ENCODE measurements at regions of chr6 and their contacts with region 1.

Region 1: GRCh38 chr6:9131616-9132015 is 696.3 kb upstream of the SLC35B3 start:
- DNase-seq: no peak
- ATAC-seq: no peak
- H3K4me3 ChIP-seq: no peak overlapping the region
- H3K27ac ChIP-seq: no peak overlapping the region
- H3K4me1 ChIP-seq: no peaks in the 10 kb centered on the region
- H3K27me3 ChIP-seq: no peaks in the 10 kb centered on the region

Region 2: DNA sequence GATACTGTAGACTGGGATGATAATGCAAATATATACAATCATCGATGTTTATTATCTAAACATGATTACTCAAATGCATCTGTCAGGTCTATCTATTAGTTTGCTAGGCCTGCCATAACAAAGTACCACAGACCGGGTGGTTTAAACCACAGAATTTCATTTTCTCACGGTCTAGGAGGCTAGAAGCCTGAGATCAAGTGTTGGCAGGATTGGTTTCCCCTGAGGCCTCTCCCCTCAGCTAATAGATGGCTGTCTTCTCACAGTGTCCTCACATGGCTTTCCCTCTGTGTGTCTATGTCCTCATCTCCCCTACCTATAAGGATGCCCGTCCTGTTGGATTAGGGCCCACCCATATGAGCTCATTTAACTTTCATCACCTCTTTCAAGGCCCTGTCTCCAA is 183.7 kb before region 1 on chr6:
- intact Hi-C with region 1: no loop called
- DNase-seq: no peak
- ATAC-seq: no peak
- H3K4me3 ChIP-seq: no peak overlapping the region
- H3K27ac ChIP-seq: no peak overlapping the region
- H3K4me1 ChIP-seq: no peaks in the 10 kb centered on the region
- H3K27me3 ChIP-seq: no peaks in the 10 kb centered on the region

Region 3: DNA sequence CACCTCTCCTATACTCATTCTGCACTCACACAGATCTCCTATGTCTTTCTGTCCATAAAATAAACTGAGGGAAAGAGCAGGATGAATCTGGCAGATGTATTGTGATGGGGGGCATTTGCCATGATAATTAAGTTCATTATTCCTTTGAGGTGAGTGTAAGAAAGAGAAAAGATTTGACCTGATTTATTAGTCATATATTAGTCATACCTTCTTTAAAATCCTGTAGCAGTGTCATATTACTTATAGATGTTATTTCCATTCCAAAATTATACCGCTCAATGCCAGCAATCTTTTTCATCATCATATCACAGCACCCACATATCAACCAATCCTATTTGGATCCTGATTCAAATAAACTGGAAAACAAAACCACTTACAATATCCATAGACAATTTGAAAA is 37.1 kb after region 1 on chr6:
- intact Hi-C with region 1: loop called in 1 of 2 experiments (anchors 2 kb)
- DNase-seq: no peak
- ATAC-seq: no peak
- H3K4me3 ChIP-seq: no peak overlapping the region
- H3K27ac ChIP-seq: no peak overlapping the region
- H3K4me1 ChIP-seq: no peaks in the 10 kb centered on the region
- H3K27me3 ChIP-seq: no peaks in the 10 kb centered on the region

Measured in aorta (tissue), 5 donors.